PC-9 (cell line): ENCODE measurements at regions of chr2 and their contacts with region 1.

Region 1: DNA sequence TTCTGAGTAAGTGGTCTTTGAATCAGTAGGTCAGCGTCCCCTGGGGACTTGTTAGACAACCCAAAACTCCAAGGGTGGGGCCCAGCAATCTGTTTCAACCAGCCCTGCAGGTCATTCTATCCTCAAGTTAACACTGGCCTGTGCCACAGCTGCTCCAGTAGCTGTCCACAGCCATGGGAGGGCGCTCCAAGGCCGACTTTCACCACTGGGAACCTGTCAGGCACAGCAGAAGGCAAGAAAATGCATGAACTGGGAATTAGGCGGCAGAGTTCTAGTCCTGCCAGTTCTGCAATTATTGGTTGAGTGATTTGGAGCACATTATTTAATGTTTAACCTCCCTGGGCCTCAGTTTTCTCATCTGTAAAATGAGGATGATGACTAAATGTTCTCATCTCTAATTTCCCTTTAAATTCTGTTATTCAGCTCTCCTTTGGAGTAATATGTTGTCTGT is 17.4 kb upstream of the MRPL33 start:
- DNase-seq: peak; percentile 79 to 87
- H3K4me3 ChIP-seq: peak overlapping the region; percentile 43; the same call in 1 of the 2 replicates
- H3K27ac ChIP-seq: peak overlapping the region; percentile 96
- H3K4me1 ChIP-seq: peaks cover 39% of the 10 kb centered on the region
- H3K27me3 ChIP-seq: no peaks in the 10 kb centered on the region
- CTCF ChIP-seq: peak; percentile 96

Region 2: DNA sequence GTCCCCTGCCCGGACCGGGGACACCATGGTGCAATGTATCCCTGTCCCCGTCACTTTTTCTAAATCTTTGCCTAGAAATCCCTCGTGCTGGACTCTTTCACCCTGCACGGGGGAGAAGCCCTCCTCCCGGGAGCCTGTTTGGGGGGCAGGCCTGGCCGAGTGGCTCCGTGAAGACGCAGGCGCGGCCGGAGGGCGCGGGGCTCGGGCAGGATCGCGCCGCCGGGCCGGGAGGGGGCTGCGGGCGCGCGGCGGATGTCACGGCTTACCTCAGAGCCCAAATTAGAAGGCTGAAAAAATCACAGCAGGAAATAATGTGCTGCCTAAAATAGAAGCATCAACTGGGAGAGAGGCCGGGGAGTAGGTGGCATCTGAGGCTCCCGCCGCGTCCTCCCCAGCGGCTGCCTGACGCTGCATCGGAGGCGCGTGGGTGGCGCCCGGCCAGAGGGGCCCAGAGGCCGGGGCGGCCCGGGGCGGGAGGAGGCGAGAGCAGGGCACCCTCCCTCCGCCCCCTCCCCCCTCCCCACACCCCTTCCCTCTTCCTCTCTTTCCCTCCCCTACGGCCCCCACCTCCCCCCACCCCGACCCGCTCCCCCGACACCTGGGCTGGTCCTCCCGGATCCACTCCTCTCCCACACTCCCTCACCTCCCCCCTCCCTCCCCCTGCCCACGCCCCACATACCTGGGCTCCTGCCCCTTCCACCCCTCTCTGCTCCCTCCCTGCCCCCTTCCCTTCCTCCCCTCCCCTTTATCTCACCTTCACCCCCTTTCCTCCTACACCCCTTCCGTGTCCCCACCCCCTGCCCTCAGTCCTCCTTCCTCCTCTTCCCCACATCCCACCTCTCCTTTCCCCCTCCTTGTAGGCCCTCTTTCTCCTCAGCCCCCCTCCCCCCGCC is 38.6 kb before region 1 on chr2:
- CTCF ChIA-PET with region 1: no interaction called
- POLR2A ChIA-PET with region 1: interaction called, 33 read pairs
- intact Hi-C with region 1: no loop called
- DNase-seq: peak; percentile 71 to 78
- H3K4me3 ChIP-seq: peak overlapping the region; percentile 80
- H3K27ac ChIP-seq: peak overlapping the region; percentile 94
- H3K4me1 ChIP-seq: peaks cover 89% of the 10 kb centered on the region
- H3K27me3 ChIP-seq: no peaks in the 10 kb centered on the region
- CTCF ChIP-seq: no peak

Region 3: DNA sequence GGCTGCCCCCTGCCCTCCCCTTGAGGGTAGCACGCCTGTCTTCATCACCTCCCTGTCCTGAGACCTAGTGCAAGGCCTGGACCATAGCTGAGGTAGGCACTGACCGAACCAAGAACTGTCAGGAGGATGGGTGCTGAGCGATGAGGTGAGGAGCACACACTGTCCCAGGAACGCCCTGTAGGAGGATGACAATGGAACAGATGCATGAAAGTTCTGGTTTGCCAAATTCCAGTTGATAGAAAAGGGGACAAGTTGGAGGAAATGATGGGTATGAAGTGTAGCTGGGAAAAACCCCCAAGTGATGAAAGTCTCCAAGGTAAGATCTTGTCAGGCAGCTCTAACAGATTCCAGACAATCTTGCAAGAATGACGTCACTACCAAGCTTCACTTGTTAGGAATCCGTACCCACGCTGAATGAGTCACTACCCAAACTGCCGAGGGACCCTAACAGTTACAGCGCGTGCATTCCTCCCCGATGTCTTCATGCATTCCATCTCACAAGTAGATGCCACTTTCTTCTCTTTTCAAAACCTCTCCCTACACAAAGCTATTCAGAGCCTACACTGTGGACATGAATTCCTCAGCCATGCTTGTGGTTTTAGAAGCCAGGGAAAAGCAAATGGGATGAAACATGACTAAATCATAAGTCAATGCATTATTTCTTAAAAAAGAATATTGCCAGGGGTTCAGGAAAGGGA is 44.9 kb after region 1 on chr2:
- CTCF ChIA-PET with region 1: interaction called, 4 read pairs
- POLR2A ChIA-PET with region 1: no interaction called
- intact Hi-C with region 1: loop called (anchors 1 kb)
- DNase-seq: peak; percentile 89 to 100
- H3K4me3 ChIP-seq: peak overlapping the region; percentile 3; the same call in 1 of the 2 replicates
- H3K27ac ChIP-seq: peak overlapping the region; percentile 94
- H3K4me1 ChIP-seq: peaks cover 40% of the 10 kb centered on the region
- H3K27me3 ChIP-seq: no peaks in the 10 kb centered on the region
- CTCF ChIP-seq: no peak

Region 4: GRCh38 chr2:27977608-27978312 is 223.6 kb after region 1 on chr2:
- CTCF ChIA-PET with region 1: no interaction called
- POLR2A ChIA-PET with region 1: no interaction called
- intact Hi-C with region 1: loop called (anchors 5 kb)
- DNase-seq: peak; percentile 55 to 97
- H3K4me3 ChIP-seq: peak overlapping the region; percentile 16; the same call in 1 of the 2 replicates
- H3K27ac ChIP-seq: peak overlapping the region; percentile 83
- H3K4me1 ChIP-seq: peaks cover 31% of the 10 kb centered on the region
- H3K27me3 ChIP-seq: no peaks in the 10 kb centered on the region
- CTCF ChIP-seq: no peak

Region 5: DNA sequence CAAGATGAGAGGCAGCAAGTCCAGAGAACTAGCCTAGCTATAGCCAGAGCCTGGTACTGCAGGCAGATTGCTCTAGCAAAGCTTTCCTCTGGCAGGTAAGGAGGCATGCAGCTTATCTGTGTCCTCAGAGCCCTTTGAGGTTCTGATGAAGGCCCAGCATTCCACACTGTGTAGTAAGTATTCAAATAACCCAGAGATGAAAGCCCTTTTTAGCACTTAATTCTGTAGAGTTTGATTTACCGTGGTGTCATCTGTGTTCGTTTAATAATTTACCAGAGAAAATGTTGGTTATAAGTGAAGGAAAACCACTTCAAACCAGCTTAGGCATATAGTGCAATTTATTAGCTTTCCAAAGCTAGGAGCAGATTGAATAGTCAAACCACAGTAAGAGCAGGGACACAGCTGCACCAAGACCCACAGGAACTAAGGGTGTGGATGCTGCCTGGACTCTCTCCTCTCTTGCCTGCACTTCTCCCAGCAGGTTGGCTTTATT is 363.0 kb after region 1 on chr2:
- CTCF ChIA-PET with region 1: no interaction called
- POLR2A ChIA-PET with region 1: no interaction called
- intact Hi-C with region 1: no loop called
- DNase-seq: no peak
- H3K4me3 ChIP-seq: no peak overlapping the region
- H3K27ac ChIP-seq: no peak overlapping the region
- H3K4me1 ChIP-seq: no peaks in the 10 kb centered on the region
- H3K27me3 ChIP-seq: no peaks in the 10 kb centered on the region
- CTCF ChIP-seq: no peak

Region 6: GRCh38 chr2:28452534-28453081 is 698.4 kb after region 1 on chr2:
- CTCF ChIA-PET with region 1: no interaction called
- POLR2A ChIA-PET with region 1: no interaction called
- intact Hi-C with region 1: loop called (anchors 1 kb)
- DNase-seq: peak in 1 of 2 experiments; percentile 75
- H3K4me3 ChIP-seq: no peak overlapping the region
- H3K27ac ChIP-seq: no peak overlapping the region
- H3K4me1 ChIP-seq: peaks cover 44% of the 10 kb centered on the region
- H3K27me3 ChIP-seq: no peaks in the 10 kb centered on the region
- CTCF ChIP-seq: peak; percentile 97